Activated CD4-positive, alpha-beta T cell treated with anti-CD3 and anti-CD28 coated beads, Interleukin-2, amount 10 ng/mL, durations not matched to agents 7 days and 5 days (primary cell): ENCODE measurements at regions of chr2 and their contacts with region 1.

Region 1: DNA sequence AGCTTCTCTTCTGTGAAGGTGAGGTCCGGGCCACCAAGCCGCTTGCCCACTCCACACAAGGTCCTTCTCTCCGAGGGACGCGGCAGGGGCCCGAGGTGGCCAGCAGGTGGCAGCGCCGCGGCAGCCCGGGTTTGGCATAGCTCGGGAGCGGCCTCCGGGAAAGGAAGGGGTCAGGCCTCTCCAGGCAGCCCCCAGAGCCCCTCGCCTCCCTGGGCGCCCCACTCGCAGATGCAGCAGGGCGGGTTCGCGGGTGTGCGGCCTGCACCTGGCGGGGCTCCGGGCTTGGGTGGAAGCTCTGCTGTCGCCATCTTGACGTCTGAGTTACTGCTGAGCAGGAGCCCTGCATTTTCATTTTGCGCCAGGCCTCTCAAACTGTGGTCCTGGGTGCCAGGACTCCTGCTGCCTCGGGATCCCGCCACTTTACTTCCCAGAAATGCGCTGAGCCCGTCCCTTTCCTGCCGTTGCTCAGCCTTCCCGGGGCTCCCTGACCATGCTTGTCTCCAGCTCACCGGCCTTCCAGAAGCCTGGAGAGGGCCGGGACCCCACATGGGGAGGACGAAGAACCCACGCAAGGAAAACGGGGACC is 18.6 kb upstream of the NCL start:
- DNase-seq: peak; percentile 73
- H3K4me3 Mint-ChIP-seq: peak overlapping the region; percentile 75
- H3K27ac Mint-ChIP-seq: peak overlapping the region; percentile 93
- H3K4me1 Mint-ChIP-seq: peaks cover 26% of the 10 kb centered on the region
- H3K27me3 Mint-ChIP-seq: no peaks in the 10 kb centered on the region

Region 2: GRCh38 chr2:230847883-230848388 is 635.0 kb before region 1 on chr2:
- CTCF ChIA-PET with region 1: no interaction called
- POLR2A ChIA-PET with region 1: no interaction called
- DNase-seq: peak; percentile 86
- H3K4me3 Mint-ChIP-seq: no peak overlapping the region
- H3K27ac Mint-ChIP-seq: no peak overlapping the region
- H3K4me1 Mint-ChIP-seq: peaks cover 9% of the 10 kb centered on the region
- H3K27me3 Mint-ChIP-seq: peaks cover 41% of the 10 kb centered on the region

Region 3: GRCh38 chr2:231394211-231395141 is 88.4 kb before region 1 on chr2:
- CTCF ChIA-PET with region 1: no interaction called
- POLR2A ChIA-PET with region 1: no interaction called
- DNase-seq: no peak
- H3K4me3 Mint-ChIP-seq: peak overlapping the region; percentile 33
- H3K27ac Mint-ChIP-seq: no peak overlapping the region
- H3K4me1 Mint-ChIP-seq: peaks cover 15% of the 10 kb centered on the region
- H3K27me3 Mint-ChIP-seq: peaks cover 25% of the 10 kb centered on the region

Region 4: GRCh38 chr2:231452799-231453508 is 29.9 kb before region 1 on chr2:
- CTCF ChIA-PET with region 1: interaction called, 17 read pairs
- POLR2A ChIA-PET with region 1: no interaction called
- DNase-seq: no peak
- H3K4me3 Mint-ChIP-seq: no peak overlapping the region
- H3K27ac Mint-ChIP-seq: peak overlapping the region; percentile 61
- H3K4me1 Mint-ChIP-seq: peaks cover 25% of the 10 kb centered on the region
- H3K27me3 Mint-ChIP-seq: no peaks in the 10 kb centered on the region

Region 5: DNA sequence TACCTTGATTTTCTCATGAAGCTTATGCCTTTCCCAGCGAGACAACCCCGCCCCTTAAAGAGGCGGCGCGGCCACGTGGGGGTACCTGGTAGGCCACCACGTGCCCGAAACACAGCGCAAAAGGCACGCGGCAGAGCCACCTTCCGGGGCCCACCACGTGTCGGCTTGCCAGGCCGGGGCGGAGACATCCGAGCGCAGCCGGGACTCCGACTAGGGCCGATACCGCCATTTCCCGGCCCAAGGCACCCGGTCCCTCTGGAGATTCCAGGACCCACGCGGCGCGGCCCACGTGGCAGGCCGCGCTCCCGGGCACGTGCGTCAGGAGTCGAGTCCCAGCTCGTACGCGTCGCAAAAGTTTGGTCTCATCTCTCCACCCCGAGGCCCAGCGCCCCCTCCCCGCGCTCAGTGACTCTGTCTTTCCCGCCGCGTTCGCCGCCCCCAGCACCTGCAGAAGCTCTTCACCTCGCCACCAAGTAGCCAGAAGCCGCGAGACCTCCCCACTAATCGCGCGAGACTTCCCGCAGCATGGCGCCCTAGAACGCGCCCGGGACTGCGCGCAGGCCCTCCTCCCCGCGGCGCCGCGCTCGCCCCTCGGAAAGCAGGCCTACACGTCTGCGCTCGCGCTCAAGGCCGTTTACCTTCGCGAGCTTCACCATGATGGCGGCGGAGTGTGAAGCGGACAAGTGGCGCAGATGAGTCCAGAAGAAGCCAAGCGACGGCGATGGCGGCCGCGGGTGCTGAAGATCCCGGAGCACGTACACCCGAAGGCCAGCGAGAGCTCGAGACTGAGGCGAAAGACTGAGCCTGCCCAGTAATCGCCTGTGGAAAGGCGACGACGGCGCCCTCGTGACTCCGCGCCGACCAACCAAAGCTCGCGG is 19.0 kb before region 1 on chr2 and contains the start of gene NCL:
- CTCF ChIA-PET with region 1: interaction called, 85 read pairs
- POLR2A ChIA-PET with region 1: interaction called, 5 read pairs
- DNase-seq: peak; percentile 90
- H3K4me3 Mint-ChIP-seq: peak within 1 kb of the TSS; percentile 95
- H3K27ac Mint-ChIP-seq: peak within 1 kb of the TSS; percentile 100
- H3K4me1 Mint-ChIP-seq: peaks cover 52% of the 10 kb centered on the region
- H3K27me3 Mint-ChIP-seq: no peaks in the 10 kb centered on the region
- total RNA-seq, gene NCL: 542 to 599 TPM

Region 6: DNA sequence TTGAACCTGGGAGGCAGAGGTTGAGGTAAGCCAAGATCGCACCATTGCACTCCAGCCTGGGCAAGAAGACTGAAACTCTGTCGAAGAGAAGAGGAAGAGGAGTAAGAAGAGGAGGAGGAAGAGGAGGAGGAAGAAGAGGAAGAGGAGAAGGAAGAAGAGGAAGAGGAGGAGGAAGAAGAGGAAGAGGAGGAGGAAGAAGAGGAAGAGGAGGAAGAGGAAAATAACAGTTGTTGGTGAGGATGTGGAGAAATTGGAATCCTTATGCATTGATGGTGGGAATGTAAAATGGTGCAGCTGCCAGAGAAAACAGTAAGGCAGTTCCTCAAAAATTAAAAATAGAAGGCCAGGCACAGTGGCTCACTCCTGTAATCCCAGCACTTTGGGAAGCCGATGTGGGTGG is 10.1 kb before region 1 on chr2:
- CTCF ChIA-PET with region 1: interaction called, 85 read pairs
- POLR2A ChIA-PET with region 1: no interaction called
- DNase-seq: no peak
- H3K4me3 Mint-ChIP-seq: no peak overlapping the region
- H3K27ac Mint-ChIP-seq: no peak overlapping the region
- H3K4me1 Mint-ChIP-seq: peaks cover 17% of the 10 kb centered on the region
- H3K27me3 Mint-ChIP-seq: no peaks in the 10 kb centered on the region

Region 7: GRCh38 chr2:231494669-231495068 is 11.8 kb after region 1 on chr2:
- CTCF ChIA-PET with region 1: interaction called, 10 read pairs
- POLR2A ChIA-PET with region 1: no interaction called
- DNase-seq: no peak
- H3K4me3 Mint-ChIP-seq: no peak overlapping the region
- H3K27ac Mint-ChIP-seq: no peak overlapping the region
- H3K4me1 Mint-ChIP-seq: peaks cover 4% of the 10 kb centered on the region
- H3K27me3 Mint-ChIP-seq: no peaks in the 10 kb centered on the region

Region 8: DNA sequence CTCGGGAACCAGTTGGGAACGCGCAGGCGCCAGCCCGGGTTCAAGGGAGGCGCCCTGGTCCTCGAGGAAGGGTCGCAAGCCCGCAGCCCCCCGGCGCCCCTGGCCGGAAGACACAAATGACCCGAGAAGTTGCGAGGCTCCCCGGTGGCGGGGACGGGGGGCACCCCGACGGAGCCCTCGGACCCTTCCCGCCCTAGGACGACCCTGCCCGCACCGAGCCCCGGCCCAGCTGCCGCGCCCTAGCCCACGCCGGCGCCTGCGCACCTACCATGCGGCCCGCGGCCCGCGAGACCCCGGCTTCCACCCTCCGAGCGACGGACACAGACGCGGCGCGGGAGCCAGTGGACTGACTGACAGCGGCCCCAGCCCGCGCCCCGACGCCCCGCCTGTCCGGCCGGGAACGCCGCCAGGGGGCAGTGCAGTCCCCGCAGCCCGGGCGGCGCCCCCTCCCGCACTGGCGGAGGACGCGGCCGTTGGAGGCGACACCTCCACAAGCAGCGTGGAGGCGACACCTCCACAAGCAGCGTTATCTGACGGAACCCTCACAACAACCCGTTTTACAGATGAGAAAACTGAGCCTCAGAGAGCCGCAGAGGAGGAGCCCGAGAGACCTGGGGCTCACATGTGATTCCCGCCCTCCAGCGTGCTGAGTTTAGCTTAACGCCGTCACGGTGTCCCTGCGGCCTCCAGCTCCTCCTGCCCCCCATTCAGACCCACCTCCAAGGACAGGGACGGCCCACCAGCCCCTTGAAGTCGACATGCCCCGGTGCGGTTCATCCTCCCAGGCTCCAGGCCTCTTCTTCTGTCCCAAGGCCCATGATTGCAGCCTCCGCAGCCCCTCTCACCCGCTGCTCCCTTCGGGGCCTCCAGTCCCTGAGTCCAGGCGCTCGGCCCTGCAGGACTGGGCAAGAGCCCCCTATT is 47.5 kb after region 1 on chr2 and contains the start of gene NMUR1:
- CTCF ChIA-PET with region 1: no interaction called
- POLR2A ChIA-PET with region 1: no interaction called
- DNase-seq: peak; percentile 73
- H3K4me3 Mint-ChIP-seq: peak within 1 kb of the TSS; percentile 27
- H3K27ac Mint-ChIP-seq: peak within 1 kb of the TSS; percentile 83
- H3K4me1 Mint-ChIP-seq: peaks cover 17% of the 10 kb centered on the region
- H3K27me3 Mint-ChIP-seq: peaks cover 37% of the 10 kb centered on the region
- total RNA-seq, gene NMUR1: 0.47 to 0.60 TPM